H1 (cell line): ENCODE measurements at regions of chr2 and their contacts with region 1.

Region 1: GRCh38 chr2:191728750-191729624 is 51.1 kb downstream of the NABP1 start:
- DNase-seq: no peak
- H3K4me3 ChIP-seq: no peak overlapping the region
- H3K27ac ChIP-seq: no peak overlapping the region
- H3K4me1 ChIP-seq: no peaks in the 10 kb centered on the region
- H3K27me3 ChIP-seq: no peaks in the 10 kb centered on the region; a peak in 1 of 7 replicates
- CTCF ChIP-seq: peak in 2 of 3 experiments; percentile 4 to 19; a peak in 2 of 4 replicates
- EP300 ChIP-seq: no peak
- POLR2A ChIP-seq: no peak
- RAD21 ChIP-seq: peak; percentile 14 to 23; a peak in 2 of 4 replicates

Region 2: DNA sequence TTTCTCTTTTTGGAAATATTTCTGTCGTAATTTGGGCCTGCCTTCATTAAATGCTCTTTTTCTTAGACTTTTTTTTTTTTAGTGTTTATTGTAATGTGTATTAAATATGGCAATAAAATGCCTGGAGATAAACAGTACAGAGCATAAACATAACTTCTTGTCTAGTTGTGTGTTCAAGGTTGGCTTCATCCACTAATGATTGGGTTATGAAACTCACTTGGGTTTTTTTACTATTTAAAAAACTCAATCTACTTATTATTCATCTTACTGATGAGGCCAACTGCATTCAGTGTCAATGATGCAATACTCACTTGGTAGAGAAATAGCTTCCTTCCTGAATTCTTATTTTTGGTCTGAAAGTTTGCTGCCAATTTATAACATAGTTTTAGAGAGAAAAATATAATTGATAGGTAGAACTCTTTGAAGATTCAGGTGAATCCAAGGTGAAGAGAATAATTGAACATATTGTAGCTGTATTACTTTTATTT is 195.2 kb before region 1 on chr2:
- CTCF ChIA-PET with region 1: no interaction called
- POLR2A ChIA-PET with region 1: no interaction called
- DNase-seq: no peak
- H3K4me3 ChIP-seq: no peak overlapping the region
- H3K27ac ChIP-seq: no peak overlapping the region
- H3K4me1 ChIP-seq: peaks cover 2 to 7% (median 3%) of the 10 kb centered on the region in 4 experiments; a peak in 3 of 7 replicates
- H3K27me3 ChIP-seq: no peaks in the 10 kb centered on the region
- CTCF ChIP-seq: no peak
- EP300 ChIP-seq: no peak
- POLR2A ChIP-seq: no peak
- RAD21 ChIP-seq: no peak

Region 3: GRCh38 chr2:191706791-191707190 is 22.2 kb before region 1 on chr2:
- CTCF ChIA-PET with region 1: interaction called, 11 read pairs
- POLR2A ChIA-PET with region 1: no interaction called
- DNase-seq: no peak
- H3K4me3 ChIP-seq: no peak overlapping the region
- H3K27ac ChIP-seq: no peak overlapping the region
- H3K4me1 ChIP-seq: no peaks in the 10 kb centered on the region
- H3K27me3 ChIP-seq: no peaks in the 10 kb centered on the region
- CTCF ChIP-seq: no peak
- EP300 ChIP-seq: no peak
- POLR2A ChIP-seq: no peak
- RAD21 ChIP-seq: no peak